A549 (cell line): ENCODE measurements at regions of chr13 and their contacts with region 1.

Region 1: GRCh38 chr13:52827839-52828238 is 20.6 kb downstream of the PCDH8 start:
- DNase-seq: no peak
- ATAC-seq: no peak
- H3K4me3 ChIP-seq: no peak overlapping the region
- H3K27ac ChIP-seq: no peak overlapping the region
- H3K4me1 ChIP-seq: no peaks in the 10 kb centered on the region
- CTCF ChIP-seq: no peak
- EP300 ChIP-seq: no peak
- POLR2A ChIP-seq: no peak
- RAD21 ChIP-seq: no peak

Region 2: DNA sequence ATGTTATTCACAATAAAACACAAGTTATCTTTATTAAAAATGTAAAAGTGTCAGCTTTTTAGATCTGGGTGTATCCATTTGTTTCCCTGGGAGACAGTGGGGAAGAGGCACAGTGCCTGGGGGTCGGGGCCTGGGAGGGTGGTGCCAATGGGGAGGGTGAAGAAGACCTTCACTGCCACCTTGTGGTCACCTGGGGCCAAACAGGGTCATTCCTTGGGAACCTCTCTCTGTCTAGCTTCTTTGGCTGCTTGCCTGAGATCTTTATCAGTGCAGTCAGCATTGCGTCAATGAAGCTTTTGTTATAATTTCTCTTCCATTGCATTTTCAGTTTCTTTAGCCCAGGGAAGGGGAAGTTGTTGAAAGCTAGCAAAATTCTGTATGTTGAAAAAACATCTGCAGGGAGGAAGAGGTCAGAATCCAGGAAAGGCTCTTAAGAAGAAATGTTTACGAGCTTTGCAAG is 18.5 kb before region 1 on chr13:
- CTCF ChIA-PET with region 1: interaction called, 10 read pairs
- POLR2A ChIA-PET with region 1: no interaction called
- DNase-seq: peak; percentile 68 to 73
- ATAC-seq: peak; percentile 83 to 92
- H3K4me3 ChIP-seq: no peak overlapping the region
- H3K27ac ChIP-seq: no peak overlapping the region
- H3K4me1 ChIP-seq: no peaks in the 10 kb centered on the region
- CTCF ChIP-seq: peak; percentile 55
- EP300 ChIP-seq: no peak
- POLR2A ChIP-seq: no peak
- RAD21 ChIP-seq: peak; percentile 68 to 72